H1 (cell line): ENCODE measurements at regions of chr11 and their contacts with region 1.

Region 1: DNA sequence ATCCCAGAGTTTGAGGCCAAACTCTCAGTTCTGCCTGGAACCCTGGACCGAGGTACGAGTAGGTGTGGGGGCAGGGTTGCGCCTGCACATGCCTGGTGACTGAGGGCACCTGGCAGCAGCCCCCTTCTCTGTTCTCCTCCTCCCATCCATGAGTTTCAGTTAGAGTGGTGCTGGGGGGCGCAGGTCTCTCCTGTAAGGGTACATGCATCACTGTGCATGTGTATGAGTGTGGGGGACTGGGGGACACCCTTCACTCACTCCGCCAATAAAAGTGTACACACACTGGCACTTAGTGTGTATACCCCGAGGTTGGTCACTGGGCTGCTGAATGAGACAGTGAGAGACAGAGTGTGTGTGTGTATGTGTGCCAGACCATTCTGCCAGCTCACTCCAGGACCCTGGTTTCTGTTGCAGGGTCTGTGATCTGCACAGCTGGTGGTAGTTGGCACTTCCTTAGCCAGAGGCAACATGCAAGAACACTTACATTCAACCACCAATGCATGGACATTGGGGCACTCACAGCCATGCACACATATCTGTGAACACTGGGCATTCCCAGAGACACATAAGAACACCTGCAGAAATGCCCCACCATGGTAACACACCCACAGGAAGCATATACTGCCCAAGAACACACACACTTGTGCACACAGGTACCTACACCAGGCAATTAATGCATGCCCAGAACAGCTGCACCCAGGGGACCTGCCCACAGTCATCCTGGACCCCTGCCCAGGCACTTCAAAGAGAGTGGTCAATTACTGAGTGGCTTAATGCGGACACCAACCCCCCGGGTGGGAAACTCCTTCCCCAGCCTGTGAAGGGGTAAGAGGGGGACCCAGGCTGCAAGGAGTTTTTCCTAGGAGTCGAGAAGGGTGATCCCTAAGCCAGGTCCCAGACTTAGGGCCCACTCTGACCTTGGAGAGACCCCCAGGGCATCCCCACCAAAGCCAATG is 1.2 kb upstream of the NRXN2 start:
- DNase-seq: no peak
- H3K4me3 ChIP-seq: peak overlapping the region in 1 of 4 experiments; percentile 83; a peak in 4 of 8 replicates
- H3K27ac ChIP-seq: no peak overlapping the region
- H3K4me1 ChIP-seq: peaks cover 10 to 33% (median 25%) of the 10 kb centered on the region in 4 experiments
- H3K27me3 ChIP-seq: peaks cover 7 to 20% (median 16%) of the 10 kb centered on the region in 4 experiments
- CTCF ChIP-seq: no peak
- EP300 ChIP-seq: no peak
- POLR2A ChIP-seq: no peak
- RAD21 ChIP-seq: no peak

Region 2: DNA sequence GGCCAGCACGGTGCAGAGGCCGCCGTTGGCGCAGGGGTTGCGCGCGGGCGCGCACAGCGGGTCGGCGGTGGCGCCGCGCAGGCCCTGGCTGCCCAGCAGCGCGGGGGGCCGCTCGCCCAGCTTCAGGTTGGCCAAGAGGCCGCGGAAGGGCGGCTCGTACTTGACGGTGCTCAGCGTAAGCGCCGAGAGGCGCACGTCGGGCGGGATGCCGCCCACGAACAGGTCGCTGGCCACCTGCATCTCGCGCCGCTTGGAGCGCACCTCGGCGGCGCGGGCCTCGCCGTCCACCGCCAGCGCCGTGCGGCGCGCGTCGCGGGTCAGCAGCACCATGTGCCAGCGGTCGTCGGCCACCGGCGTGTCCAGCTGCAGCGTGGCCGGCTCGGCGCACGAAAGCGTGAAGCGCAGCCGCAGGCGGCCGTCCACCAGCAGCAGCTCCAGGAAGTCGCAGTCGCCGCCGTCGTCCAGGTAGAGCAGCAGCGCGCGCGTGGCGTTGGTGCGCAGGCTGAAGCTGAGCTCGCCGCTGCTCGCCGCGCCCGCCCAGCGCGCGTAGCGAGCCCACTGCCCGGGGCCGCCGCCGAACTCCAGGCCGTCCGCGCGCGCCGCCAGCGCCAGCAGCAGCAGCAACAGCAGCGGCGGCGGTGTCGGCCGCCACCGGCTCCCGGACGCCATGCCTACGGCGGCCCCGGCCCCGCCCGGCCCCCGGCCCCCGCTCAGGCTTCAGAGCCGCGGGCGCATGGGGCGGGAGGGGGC is 11.0 kb before region 1 on chr11:
- CTCF ChIA-PET with region 1: interaction called, 3 read pairs
- POLR2A ChIA-PET with region 1: interaction called, 22 read pairs
- DNase-seq: no peak
- H3K4me3 ChIP-seq: peak overlapping the region; percentile 28 to 55 (median 42)
- H3K27ac ChIP-seq: no peak overlapping the region
- H3K4me1 ChIP-seq: peaks cover 12 to 28% (median 20%) of the 10 kb centered on the region in 4 experiments
- H3K27me3 ChIP-seq: peaks cover 12 to 49% (median 33%) of the 10 kb centered on the region in 4 experiments
- CTCF ChIP-seq: no peak
- EP300 ChIP-seq: no peak
- POLR2A ChIP-seq: no peak
- RAD21 ChIP-seq: no peak

Region 3: DNA sequence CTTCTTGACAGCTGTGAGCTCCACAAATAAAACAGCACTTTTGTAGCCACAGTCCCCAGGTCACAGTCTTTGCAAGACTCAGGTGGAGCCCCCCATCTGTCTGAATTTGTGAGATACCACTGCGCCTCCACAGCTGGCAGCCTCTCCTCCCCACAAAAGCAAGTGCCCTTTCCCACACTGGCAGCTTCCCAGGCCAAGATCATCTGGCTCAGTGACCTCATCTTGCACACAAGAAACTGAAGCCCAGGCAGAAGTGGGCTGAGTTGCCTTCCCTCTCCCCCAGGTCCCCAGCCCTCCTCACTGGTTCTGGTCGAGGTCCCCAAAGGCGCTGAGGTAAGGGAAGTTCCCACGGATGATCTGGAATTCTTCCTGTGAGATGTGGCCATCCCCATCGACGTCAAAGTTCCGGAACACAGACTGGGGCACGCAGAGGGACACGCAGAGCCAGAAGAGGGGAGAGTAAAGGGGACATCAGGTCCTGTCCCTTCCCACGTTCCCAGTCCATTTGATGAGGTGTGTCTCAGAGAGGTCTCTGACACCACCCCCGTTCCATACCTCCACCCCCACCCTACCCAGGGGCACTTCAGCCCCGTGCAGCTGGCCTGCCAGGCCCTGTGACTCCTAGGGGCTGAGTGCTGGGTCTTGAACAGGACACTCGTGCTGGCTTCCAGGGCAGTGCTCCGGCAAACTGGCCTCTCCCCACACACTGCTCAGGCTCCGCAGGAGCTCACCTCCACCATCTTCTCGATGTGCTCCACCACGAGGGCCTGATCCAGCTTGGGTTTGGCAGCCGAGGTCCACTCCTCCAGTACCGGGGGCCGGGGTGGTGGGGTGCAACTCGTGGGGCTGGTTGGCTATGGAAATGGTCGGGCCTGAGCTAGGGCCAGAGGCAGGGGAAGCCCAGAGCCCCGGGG is 10.9 kb after region 1 on chr11:
- CTCF ChIA-PET with region 1: interaction called, 30 read pairs
- POLR2A ChIA-PET with region 1: interaction called, 48 read pairs
- DNase-seq: no peak
- H3K4me3 ChIP-seq: no peak overlapping the region
- H3K27ac ChIP-seq: no peak overlapping the region
- H3K4me1 ChIP-seq: peaks cover 0 to 19% (median 10%) of the 10 kb centered on the region in 4 experiments; a peak in 6 of 7 replicates
- H3K27me3 ChIP-seq: no peaks in the 10 kb centered on the region; a peak in 2 of 7 replicates
- CTCF ChIP-seq: no peak
- EP300 ChIP-seq: no peak
- POLR2A ChIP-seq: no peak
- RAD21 ChIP-seq: no peak

Region 4: DNA sequence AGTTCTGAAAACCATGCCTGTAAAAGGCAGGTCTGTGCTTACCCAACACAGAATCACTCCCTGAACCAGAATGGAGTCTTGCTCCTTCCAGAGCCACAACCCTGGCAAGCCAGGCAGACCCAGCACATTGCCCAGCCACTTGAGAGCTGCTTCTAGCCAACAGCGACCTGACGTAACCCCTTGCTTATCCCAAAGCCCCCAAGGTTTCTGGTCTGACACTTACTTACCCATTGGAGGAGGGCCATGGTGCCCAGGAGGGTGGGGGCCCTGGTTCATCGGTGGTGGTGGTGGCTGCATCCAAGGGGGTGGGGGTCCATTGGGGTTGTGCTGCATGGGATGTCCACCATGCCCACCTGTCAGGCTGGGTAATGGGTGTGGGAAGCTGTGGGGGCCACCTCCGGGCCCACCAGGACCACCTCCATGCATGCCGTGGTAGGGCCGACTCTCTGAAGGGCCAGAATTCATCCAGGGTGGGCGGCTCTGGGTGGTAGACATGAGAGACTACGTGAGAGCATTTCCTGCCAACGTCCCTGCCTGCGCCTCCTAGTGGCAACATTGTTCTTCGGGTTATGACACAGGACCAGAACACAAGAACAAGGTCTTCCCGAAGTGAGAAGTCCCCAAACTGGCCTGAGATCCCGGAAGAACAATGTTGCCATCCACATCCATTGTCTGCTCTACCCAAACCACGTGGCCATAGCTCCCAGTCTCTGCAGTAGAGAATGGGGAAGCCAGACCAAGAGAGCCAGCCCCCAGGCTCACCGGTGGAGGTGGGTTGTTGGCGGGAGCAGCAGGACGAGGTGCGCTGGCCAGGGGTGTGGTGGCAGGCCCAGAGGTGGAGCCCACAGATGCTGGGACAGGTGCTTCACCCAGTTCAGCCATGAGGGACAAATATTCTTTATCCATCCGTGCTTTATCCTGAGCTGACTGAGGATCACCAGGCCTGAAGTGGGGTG is 43.4 kb after region 1 on chr11:
- CTCF ChIA-PET with region 1: interaction called, 3 read pairs
- POLR2A ChIA-PET with region 1: interaction called, 1,087 read pairs
- DNase-seq: peak in 1 of 2 experiments; percentile 95
- H3K4me3 ChIP-seq: no peak overlapping the region
- H3K27ac ChIP-seq: peak overlapping the region; percentile 0; the same call in 1 of the 2 replicates
- H3K4me1 ChIP-seq: peaks cover 20 to 41% (median 35%) of the 10 kb centered on the region in 4 experiments
- H3K27me3 ChIP-seq: no peaks in the 10 kb centered on the region; a peak in 1 of 7 replicates
- CTCF ChIP-seq: peak in 2 of 3 experiments; percentile 75 to 89; a peak in 3 of 4 replicates
- EP300 ChIP-seq: no peak
- POLR2A ChIP-seq: no peak; a peak in 1 of 3 replicates
- RAD21 ChIP-seq: peak; percentile 39 to 57

Region 5: DNA sequence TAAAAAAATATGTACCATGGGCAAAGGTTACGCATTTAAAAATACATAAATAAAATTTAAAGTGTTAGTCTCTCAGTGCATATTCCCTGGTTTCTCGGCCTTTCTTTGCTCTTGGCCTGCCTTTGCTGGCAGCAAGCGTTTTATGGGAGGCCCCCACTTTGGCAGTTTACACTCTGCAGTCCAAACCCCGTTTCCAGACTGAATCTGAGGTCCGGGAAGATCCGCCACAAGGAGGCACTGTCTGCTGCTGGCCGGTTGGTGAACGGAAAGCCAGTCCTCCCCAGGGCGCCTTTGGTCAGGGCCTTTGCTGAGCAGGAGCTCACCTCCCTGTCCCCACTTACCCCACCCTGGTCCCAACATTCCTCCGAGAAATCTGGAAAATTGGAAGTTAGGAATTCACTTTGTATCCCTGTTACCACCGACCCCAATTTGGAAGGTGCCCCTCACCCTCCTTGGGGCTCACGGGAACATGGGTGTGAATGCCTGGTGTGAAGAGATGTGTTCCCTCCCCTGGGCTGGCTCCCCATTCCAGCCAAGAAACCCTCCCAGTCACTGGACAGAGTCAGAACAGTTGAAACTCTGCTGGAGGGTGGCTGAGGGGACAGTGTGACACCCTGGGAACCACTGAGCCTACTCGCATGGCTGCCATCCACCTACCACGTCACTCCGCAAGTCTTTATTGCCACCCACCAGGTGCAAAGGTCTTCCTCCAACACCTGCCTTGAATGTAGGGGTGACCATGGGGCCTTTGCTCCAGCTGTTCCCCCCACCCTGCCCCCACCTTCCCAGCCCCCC is 63.5 kb after region 1 on chr11:
- CTCF ChIA-PET with region 1: no interaction called
- POLR2A ChIA-PET with region 1: no interaction called
- DNase-seq: peak in 1 of 2 experiments; percentile 89
- H3K4me3 ChIP-seq: no peak overlapping the region
- H3K27ac ChIP-seq: no peak overlapping the region
- H3K4me1 ChIP-seq: no peaks in the 10 kb centered on the region
- H3K27me3 ChIP-seq: no peaks in the 10 kb centered on the region
- CTCF ChIP-seq: peak; percentile 87 to 91 (median 90)
- EP300 ChIP-seq: no peak
- POLR2A ChIP-seq: no peak
- RAD21 ChIP-seq: peak; percentile 73 to 82